ENCODE measurements at regions of chr6 and their contacts with region 1.

Region 1: GRCh38 chr6:53484476-53485280 is 60.2 kb downstream of the GCLC start:
- DNase-seq: no peak
- ATAC-seq: peak; percentile 65
- H3K4me3 ChIP-seq: no peak overlapping the region
- H3K27ac ChIP-seq: no peak overlapping the region
- H3K4me1 ChIP-seq: no peaks in the 10 kb centered on the region
- H3K27me3 ChIP-seq: no peaks in the 10 kb centered on the region
- CTCF ChIP-seq: peak; percentile 88 to 98 (median 96); a peak in 5 of 6 replicates
- EP300 ChIP-seq: no peak
- POLR2A ChIP-seq: no peak
- RAD21 ChIP-seq: peak; percentile 99

Region 2: GRCh38 chr6:52503848-52504781 is 980.6 kb before region 1 on chr6:
- CTCF ChIA-PET with region 1: no interaction called
- POLR2A ChIA-PET with region 1: no interaction called
- RAD21 ChIA-PET with region 1: no interaction called
- SMC1A ChIA-PET with region 1: no interaction called
- in situ Hi-C with region 1: no loop called
- intact Hi-C with region 1: no loop called
- DNase-seq: no peak
- ATAC-seq: peak; percentile 10; the same call in 1 of the 3 replicates
- H3K4me3 ChIP-seq: no peak overlapping the region
- H3K27ac ChIP-seq: no peak overlapping the region
- H3K4me1 ChIP-seq: peaks cover 11% of the 10 kb centered on the region
- H3K27me3 ChIP-seq: no peaks in the 10 kb centered on the region
- CTCF ChIP-seq: no peak
- EP300 ChIP-seq: no peak
- POLR2A ChIP-seq: no peak
- RAD21 ChIP-seq: no peak

Region 3: DNA sequence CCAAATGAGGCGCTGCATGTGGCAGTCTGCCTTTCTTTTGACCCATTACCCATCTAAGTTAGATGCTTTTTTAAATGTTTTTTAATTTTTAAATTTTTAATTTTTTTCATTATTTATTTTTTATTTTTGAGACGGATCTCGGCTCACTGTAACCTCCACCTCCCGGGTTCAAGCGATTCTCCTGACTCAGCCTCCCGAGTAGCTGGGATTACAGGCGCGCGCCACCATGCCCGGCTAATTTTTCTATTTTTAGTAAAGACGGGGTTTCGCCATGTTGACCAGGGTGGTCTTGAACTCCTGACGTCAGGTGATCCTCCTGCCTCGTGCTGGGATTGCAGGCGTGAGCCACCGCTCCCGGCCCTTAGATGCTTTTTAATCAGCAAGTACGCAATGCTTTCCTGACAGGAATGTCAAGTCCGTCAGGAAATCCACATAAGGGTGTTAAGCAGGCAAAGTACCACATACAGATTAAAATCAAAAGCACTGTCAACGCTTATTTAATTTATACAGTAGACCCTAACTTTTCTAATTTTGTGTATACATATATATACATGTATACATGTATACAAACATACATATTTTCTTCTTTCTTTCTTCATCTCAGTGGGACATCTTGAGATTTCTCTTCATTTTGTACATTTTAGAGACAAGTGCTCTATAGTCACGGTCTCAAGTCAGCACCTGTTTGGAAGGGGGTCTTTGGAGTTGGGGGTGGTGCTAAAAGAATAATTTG is 488.6 kb before region 1 on chr6:
- CTCF ChIA-PET with region 1: no interaction called
- POLR2A ChIA-PET with region 1: no interaction called
- RAD21 ChIA-PET with region 1: interaction called, 3 read pairs
- SMC1A ChIA-PET with region 1: no interaction called
- in situ Hi-C with region 1: no loop called
- intact Hi-C with region 1: loop called (anchors 5 kb)
- DNase-seq: peak; percentile 51
- ATAC-seq: peak; percentile 11
- H3K4me3 ChIP-seq: peak overlapping the region; percentile 65
- H3K27ac ChIP-seq: no peak overlapping the region
- H3K4me1 ChIP-seq: no peaks in the 10 kb centered on the region
- H3K27me3 ChIP-seq: no peaks in the 10 kb centered on the region
- CTCF ChIP-seq: no peak
- EP300 ChIP-seq: no peak
- POLR2A ChIP-seq: no peak
- RAD21 ChIP-seq: no peak

Region 4: GRCh38 chr6:53171605-53172446 is 312.9 kb before region 1 on chr6:
- CTCF ChIA-PET with region 1: interaction called, 235 read pairs
- POLR2A ChIA-PET with region 1: interaction called, 5 read pairs
- RAD21 ChIA-PET with region 1: interaction called, 99 read pairs
- SMC1A ChIA-PET with region 1: interaction called, 188 read pairs
- in situ Hi-C with region 1: loop called (anchors 5 kb)
- intact Hi-C with region 1: loop called (anchors 1 kb)
- DNase-seq: peak; percentile 37
- ATAC-seq: peak; percentile 90
- H3K4me3 ChIP-seq: no peak overlapping the region
- H3K27ac ChIP-seq: no peak overlapping the region
- H3K4me1 ChIP-seq: no peaks in the 10 kb centered on the region
- H3K27me3 ChIP-seq: no peaks in the 10 kb centered on the region
- CTCF ChIP-seq: peak; percentile 97 to 100 (median 100)
- EP300 ChIP-seq: no peak
- POLR2A ChIP-seq: no peak
- RAD21 ChIP-seq: peak; percentile 100

Region 5: DNA sequence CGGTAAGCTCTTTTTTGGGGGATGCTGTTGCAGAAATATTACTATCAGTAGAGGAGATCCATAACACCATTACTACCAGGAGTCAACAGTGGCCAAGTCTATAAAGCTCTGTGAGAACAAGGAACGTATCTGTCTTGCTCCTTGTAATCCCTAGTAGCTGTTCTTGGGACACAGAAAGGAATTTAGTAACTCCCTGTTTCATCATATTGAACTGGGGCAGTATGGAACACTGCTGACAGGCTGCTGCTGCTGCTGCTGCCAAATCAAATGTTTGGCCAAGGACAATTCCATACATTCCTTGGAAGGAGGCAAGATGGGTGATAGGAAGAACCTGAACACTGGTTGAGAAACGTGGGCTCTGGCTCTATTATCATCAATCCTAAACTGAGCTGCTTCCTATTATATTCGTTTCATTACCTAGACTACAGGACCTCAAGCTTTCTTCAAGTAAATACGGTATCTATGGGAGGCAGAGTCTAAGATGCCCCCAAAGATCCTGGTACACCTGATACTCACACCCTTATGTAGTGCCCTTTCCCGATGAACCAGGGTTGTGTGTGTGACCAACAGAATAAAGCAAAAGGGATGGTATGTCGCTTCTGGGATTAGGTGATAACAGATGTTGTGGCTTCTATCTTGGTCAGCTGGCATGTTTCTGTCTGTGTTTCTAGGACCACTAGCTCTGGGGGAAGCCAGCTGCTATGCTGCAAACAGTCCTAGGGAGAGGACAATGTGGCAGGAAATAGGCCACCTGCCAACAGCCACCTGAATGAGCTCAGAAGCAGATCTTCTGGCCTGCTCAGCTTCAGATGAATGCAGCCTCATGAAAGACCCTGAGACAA is 175.4 kb before region 1 on chr6:
- CTCF ChIA-PET with region 1: interaction called, 3 read pairs
- POLR2A ChIA-PET with region 1: no interaction called
- RAD21 ChIA-PET with region 1: no interaction called
- SMC1A ChIA-PET with region 1: interaction called, 11 read pairs
- in situ Hi-C with region 1: no loop called
- intact Hi-C with region 1: no loop called
- DNase-seq: peak; percentile 42
- ATAC-seq: peak; percentile 58
- H3K4me3 ChIP-seq: no peak overlapping the region
- H3K27ac ChIP-seq: peak overlapping the region; percentile 10
- H3K4me1 ChIP-seq: peaks cover 39% of the 10 kb centered on the region
- H3K27me3 ChIP-seq: no peaks in the 10 kb centered on the region
- CTCF ChIP-seq: no peak
- EP300 ChIP-seq: peak in 1 of 2 experiments; percentile 19; a peak in 1 of 4 replicates
- POLR2A ChIP-seq: peak; percentile 28; the same call in 1 of the 2 replicates
- RAD21 ChIP-seq: no peak

Region 6: DNA sequence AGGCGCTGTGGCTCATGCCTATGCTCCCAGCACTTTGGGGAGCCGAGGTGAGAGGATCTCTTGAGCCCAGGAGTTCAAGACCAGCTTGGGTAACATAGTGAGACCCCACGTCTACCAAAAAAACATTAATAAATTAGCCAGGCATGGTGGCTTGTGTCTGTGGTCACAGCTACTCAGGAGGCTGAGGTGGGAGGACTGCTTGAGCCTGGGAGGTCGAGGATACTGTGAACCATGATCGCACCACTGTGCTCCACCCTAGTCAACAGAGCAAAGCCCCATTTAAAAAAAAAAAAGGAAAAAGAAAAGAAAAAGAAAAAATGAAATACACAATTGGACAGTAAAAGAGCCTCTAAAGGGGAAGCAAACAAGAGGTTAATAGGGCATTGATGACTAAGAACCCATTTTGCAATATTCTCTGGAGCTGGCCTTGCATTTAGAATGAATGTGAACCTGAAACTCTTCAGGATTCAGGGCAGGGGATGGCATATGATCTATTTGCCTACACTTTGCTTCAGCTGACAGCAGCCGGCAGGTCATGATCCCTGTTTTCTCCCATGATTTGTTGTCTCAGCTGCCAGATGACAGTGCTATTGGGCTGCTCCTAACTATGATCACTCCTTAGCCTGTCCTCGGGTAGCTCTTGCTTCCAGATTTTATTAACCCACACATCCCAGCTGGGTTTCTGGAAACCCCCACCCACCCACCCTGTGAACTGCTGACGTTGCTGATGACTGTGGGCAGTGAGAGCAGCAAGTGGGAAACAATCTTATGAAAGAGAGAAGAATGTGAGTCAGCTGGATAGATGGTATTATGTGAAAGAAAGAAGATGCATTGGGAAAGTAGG is 52.1 kb before region 1 on chr6:
- CTCF ChIA-PET with region 1: interaction called, 164 read pairs
- POLR2A ChIA-PET with region 1: interaction called, 4 read pairs
- RAD21 ChIA-PET with region 1: interaction called, 19 read pairs
- SMC1A ChIA-PET with region 1: interaction called, 42 read pairs
- in situ Hi-C with region 1: no loop called
- intact Hi-C with region 1: loop called (anchors 1 kb)
- DNase-seq: no peak
- ATAC-seq: peak; percentile 44
- H3K4me3 ChIP-seq: no peak overlapping the region
- H3K27ac ChIP-seq: no peak overlapping the region
- H3K4me1 ChIP-seq: no peaks in the 10 kb centered on the region
- H3K27me3 ChIP-seq: no peaks in the 10 kb centered on the region
- CTCF ChIP-seq: no peak
- EP300 ChIP-seq: no peak
- POLR2A ChIP-seq: no peak
- RAD21 ChIP-seq: no peak

Region 7: DNA sequence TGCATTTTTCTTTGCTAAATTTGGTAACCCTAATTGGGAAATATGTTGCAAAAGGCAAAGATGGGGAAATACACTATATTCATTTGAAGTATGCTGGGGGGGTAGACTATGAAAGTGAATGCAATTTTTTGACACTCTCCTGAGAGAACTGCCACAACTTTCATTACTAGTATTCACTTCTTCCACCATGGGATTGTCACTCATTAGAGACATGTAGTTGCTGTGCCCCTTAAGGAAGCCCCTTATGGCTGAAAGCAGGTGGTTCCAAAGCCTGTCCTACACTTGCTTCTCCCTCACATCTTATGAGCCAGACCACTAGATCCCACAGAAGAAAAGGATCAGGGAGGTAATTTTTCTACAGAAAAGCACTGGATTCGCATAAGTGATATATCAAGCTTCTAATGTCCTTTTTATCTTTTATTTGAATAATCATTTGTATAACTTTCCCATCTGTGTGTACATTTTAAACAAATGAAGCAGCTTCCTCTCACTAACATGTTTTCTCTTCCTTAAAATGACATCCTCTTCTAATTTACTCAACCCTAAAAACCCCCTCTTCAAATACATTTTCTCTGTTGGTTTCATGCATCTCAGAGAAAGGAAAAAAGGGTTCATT is 23.5 kb before region 1 on chr6:
- CTCF ChIA-PET with region 1: interaction called, 47 read pairs
- POLR2A ChIA-PET with region 1: interaction called, 4 read pairs
- RAD21 ChIA-PET with region 1: interaction called, 43 read pairs
- SMC1A ChIA-PET with region 1: interaction called, 194 read pairs
- in situ Hi-C with region 1: no loop called
- intact Hi-C with region 1: loop called (anchors 1 kb)
- DNase-seq: peak; percentile 65
- ATAC-seq: peak; percentile 81
- H3K4me3 ChIP-seq: 0 out of 2 replicates have a peak overlapping the region, but pooled peaks have one; percentile 30
- H3K27ac ChIP-seq: peak overlapping the region; percentile 41; the same call in 1 of the 2 replicates
- H3K4me1 ChIP-seq: no peaks in the 10 kb centered on the region
- H3K27me3 ChIP-seq: no peaks in the 10 kb centered on the region
- CTCF ChIP-seq: no peak
- EP300 ChIP-seq: peak; percentile 40 to 60; a peak in 2 of 4 replicates
- POLR2A ChIP-seq: no peak
- RAD21 ChIP-seq: no peak